CD14-positive monocyte (primary cell): ENCODE measurements at regions of chr11 and their contacts with region 1.

Region 1: DNA sequence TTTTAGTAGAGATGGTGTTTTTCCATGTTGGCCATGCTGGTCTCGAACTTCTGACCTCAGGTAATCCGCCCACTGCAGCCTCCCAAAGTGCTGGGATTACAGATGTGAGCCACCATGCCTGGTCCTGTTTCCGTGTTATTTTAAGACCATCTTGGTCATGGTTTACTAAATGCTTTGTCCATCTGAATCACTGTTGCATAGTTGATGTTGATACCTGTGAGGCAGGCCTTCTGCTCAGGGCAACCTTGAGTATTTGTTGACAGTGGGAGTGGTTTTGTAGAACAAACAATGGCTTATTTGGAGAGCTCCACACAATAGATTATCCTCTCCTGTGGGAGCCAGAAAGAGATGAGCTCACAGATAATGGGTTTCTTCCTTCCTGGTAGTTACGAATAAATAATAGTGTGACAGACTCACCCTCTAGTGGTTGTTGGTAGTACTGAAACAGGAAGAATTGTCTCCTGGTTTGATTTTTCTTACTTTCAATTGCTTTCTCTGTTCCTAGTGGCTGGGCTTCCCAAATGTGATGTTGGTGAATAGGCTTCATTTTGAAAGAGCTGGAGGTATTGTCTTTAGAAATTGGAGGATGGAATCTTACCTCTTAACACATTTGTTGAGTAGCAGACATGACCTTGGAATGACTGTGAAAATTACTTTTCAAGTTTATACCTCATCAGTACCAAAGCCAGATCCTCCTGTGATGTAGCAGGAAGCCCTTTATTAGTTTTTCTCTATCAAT is 39.0 kb downstream of the CTNND1 start:
- DNase-seq: peak; percentile 42 to 77 (median 64)
- H3K4me3 ChIP-seq: peak overlapping the region in 1 of 3 experiments; percentile 14
- H3K4me3 Mint-ChIP-seq: peak overlapping the region in 1 of 2 donors; percentile 82
- H3K27ac ChIP-seq: peak overlapping the region in 1 of 2 donors; percentile 12
- H3K27ac Mint-ChIP-seq: peak overlapping the region in 6 of 7 donors; percentile 53 to 87 (median 76)
- H3K4me1 ChIP-seq: peaks cover 37% of the 10 kb centered on the region in 2 donors
- H3K4me1 Mint-ChIP-seq: peaks cover 31% of the 10 kb centered on the region
- H3K27me3 ChIP-seq: no peaks in the 10 kb centered on the region
- H3K27me3 Mint-ChIP-seq: peaks cover 0 to 1% (median 0%) of the 10 kb centered on the region in 3 donors
- CTCF ChIP-seq: peak; percentile 90

Region 2: GRCh38 chr11:57567515-57568329 is 232.9 kb before region 1 on chr11 and contains the start of gene UBE2L6:
- intact Hi-C with region 1: loop called (anchors 5 kb)
- DNase-seq: peak in 1 of 3 donors; percentile 15
- H3K4me3 ChIP-seq: peak within 1 kb of the TSS; percentile 69 to 100 (median 98)
- H3K4me3 Mint-ChIP-seq: peak within 1 kb of the TSS; percentile 97 to 98
- H3K27ac ChIP-seq: peak within 1 kb of the TSS; percentile 63 to 93
- H3K27ac Mint-ChIP-seq: peak within 1 kb of the TSS; percentile 84 to 95 (median 93)
- H3K4me1 ChIP-seq: peaks cover 42 to 58% of the 10 kb centered on the region in 2 donors
- H3K4me1 Mint-ChIP-seq: peaks cover 56% of the 10 kb centered on the region
- H3K27me3 ChIP-seq: no peaks in the 10 kb centered on the region
- H3K27me3 Mint-ChIP-seq: peaks cover 0 to 2% (median 0%) of the 10 kb centered on the region in 3 donors
- CTCF ChIP-seq: peak; percentile 98
- polyA plus RNA-seq, gene UBE2L6: 101 to 284 (median 268) TPM

Region 3: DNA sequence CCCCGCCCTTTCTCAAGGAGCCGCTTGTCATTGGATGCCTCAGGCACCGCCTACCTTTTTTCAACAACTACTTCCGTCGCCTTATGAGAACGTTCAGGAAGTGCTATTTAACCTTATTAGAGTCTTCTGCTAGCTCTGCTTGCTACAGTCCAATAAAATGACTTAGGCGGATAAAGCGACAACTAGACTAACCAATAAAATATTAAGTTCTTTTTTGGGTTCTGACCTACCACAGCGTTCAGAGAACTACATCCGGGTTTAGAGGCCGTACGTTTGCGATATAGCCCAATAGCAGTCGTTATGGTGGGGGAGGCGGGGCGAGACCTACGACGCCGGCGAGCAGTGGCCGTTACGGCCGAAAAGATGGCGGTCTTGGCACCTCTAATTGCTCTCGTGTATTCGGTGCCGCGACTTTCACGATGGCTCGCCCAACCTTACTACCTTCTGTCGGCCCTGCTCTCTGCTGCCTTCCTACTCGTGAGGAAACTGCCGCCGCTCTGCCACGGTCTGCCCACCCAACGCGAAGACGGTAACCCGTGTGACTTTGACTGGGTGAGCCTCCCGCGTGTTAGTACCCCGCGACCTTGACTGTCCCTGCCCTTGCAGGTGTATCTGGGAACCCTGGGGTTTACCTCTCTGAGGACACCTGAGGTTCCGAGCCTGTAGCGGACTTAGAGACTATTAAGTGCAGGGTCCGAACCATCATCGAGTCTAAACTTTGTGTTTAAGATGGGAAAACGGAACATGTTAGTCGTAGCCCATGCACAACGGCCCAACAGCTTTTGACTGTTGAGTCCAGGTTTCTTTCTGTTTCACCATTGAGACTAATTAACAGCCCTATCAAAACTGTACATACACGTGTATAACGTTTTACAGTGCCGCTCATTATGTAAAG is 88.1 kb before region 1 on chr11 and contains the start of gene TMX2:
- intact Hi-C with region 1: loop called in 1 of 2 experiments (anchors 5 kb)
- DNase-seq: peak; percentile 96 to 99 (median 98)
- H3K4me3 ChIP-seq: peak within 1 kb of the TSS; percentile 72 to 100 (median 96)
- H3K4me3 Mint-ChIP-seq: peak within 1 kb of the TSS; percentile 98
- H3K27ac ChIP-seq: peak within 1 kb of the TSS; percentile 72 to 97
- H3K27ac Mint-ChIP-seq: peak within 1 kb of the TSS; percentile 95 to 99 (median 98)
- H3K4me1 ChIP-seq: peaks cover 22 to 31% of the 10 kb centered on the region in 2 donors
- H3K4me1 Mint-ChIP-seq: peaks cover 32% of the 10 kb centered on the region
- H3K27me3 ChIP-seq: no peaks in the 10 kb centered on the region
- H3K27me3 Mint-ChIP-seq: peaks cover 0 to 2% (median 2%) of the 10 kb centered on the region in 3 donors
- CTCF ChIP-seq: no peak
- polyA plus RNA-seq, gene TMX2: 28.9 to 71.6 (median 52.9) TPM

Region 4: DNA sequence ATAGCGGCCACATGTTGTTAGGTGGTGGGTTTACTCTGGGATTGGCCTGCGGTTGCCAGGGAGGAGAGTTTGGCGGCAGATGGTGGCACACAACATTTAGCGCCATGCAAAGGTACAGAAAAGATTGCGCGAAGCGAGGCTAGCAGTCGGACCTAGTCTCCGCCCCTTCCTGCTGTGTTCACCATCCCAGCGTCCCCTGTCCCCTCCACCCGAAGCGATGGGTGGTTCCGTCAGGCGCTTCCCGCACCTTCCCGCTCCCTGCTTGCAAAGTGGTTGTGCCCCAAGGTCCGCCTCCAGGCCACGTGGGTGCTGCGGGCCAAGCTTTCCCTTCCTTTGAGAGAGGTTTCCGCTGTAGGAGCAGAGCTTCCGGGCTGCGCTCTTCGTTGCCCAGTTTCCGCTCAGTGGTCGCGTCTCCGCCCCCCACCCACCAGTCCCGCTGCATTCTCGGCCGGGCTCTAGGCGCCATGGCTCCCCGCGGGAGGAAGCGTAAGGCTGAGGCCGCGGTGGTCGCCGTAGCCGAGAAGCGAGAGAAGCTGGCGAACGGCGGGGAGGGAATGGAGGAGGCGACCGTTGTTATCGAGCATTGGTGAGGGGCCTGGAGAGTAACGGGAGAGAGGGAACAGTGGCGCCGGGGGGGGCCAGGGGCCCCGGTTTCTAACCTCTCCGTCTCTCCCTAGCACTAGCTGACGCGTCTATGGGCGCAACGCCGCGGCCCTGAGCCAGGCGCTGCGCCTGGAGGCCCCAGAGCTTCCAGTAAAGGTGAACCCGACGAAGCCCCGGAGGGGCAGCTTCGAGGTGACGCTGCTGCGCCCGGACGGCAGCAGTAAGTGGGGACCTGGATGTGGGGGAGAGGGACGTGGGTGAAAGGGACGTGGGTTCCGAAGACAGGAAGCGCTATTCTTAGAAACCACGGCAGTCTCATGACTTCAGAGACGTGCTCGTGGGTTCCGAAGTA is 59.2 kb before region 1 on chr11 and contains the start of gene SELENOH:
- intact Hi-C with region 1: loop called in 1 of 2 experiments (anchors 5 kb)
- DNase-seq: peak; percentile 90 to 93 (median 90)
- H3K4me3 ChIP-seq: peak within 1 kb of the TSS; percentile 89 to 98 (median 94)
- H3K4me3 Mint-ChIP-seq: peak within 1 kb of the TSS; percentile 96 to 99
- H3K27ac ChIP-seq: peak within 1 kb of the TSS; percentile 87 to 94
- H3K27ac Mint-ChIP-seq: peak within 1 kb of the TSS; percentile 92 to 97 (median 94)
- H3K4me1 ChIP-seq: peaks cover 15 to 17% of the 10 kb centered on the region in 2 donors
- H3K4me1 Mint-ChIP-seq: peaks cover 14% of the 10 kb centered on the region
- H3K27me3 ChIP-seq: no peaks in the 10 kb centered on the region
- H3K27me3 Mint-ChIP-seq: no peaks in the 10 kb centered on the region
- CTCF ChIP-seq: no peak
- polyA plus RNA-seq, gene SELENOH: 99.5 to 260 (median 206) TPM

Region 5: GRCh38 chr11:57761301-57762234 is 39.0 kb before region 1 on chr11 and contains the start of gene CTNND1:
- intact Hi-C with region 1: loop called in 1 of 2 experiments (anchors 5 kb)
- DNase-seq: peak; percentile 75 to 89 (median 87)
- H3K4me3 ChIP-seq: peak within 1 kb of the TSS; percentile 83 to 99 (median 93)
- H3K4me3 Mint-ChIP-seq: peak within 1 kb of the TSS; percentile 97
- H3K27ac ChIP-seq: peak within 1 kb of the TSS; percentile 29 to 87
- H3K27ac Mint-ChIP-seq: peak within 1 kb of the TSS; percentile 87 to 98 (median 94)
- H3K4me1 ChIP-seq: peaks cover 23 to 27% of the 10 kb centered on the region in 2 donors
- H3K4me1 Mint-ChIP-seq: peaks cover 35% of the 10 kb centered on the region
- H3K27me3 ChIP-seq: no peaks in the 10 kb centered on the region
- H3K27me3 Mint-ChIP-seq: peaks cover 0 to 5% (median 0%) of the 10 kb centered on the region in 3 donors
- CTCF ChIP-seq: no peak
- polyA plus RNA-seq, gene CTNND1: 10.8 to 36.0 (median 13.7) TPM

Region 6: DNA sequence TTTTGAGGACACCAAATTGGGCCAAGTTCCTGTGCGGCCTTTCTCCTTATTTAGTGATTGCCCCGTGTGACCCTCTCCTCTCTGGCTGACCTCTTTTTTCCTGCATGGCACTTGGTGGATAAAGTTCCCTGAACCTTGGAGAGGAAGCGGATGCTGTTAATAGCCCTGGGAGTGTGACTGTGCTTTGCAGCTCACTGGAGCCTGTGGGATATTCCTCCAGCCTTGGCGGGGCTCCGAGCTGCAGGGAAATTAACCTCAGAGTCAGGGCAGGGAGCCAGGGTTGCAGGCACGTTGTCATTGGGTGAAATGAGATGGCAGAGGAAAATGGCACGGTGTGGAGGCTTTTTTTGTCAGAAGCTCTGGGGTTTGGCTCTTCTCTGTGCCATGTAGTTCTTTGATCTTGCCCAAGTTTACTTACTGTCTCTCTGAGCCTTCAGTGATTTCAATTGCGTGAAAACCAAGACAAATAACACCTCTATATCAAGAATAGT is 224.0 kb after region 1 on chr11:
- intact Hi-C with region 1: no loop called
- DNase-seq: no peak
- H3K4me3 ChIP-seq: no peak overlapping the region
- H3K4me3 Mint-ChIP-seq: no peak overlapping the region
- H3K27ac ChIP-seq: no peak overlapping the region
- H3K27ac Mint-ChIP-seq: peak overlapping the region in 1 of 7 donors; percentile 1
- H3K4me1 ChIP-seq: no peaks in the 10 kb centered on the region
- H3K4me1 Mint-ChIP-seq: no peaks in the 10 kb centered on the region
- H3K27me3 ChIP-seq: no peaks in the 10 kb centered on the region
- H3K27me3 Mint-ChIP-seq: peaks cover 0 to 5% (median under 1%) of the 10 kb centered on the region in 3 donors
- CTCF ChIP-seq: no peak

Region 7: GRCh38 chr11:58142761-58143160 is 342.1 kb after region 1 on chr11:
- intact Hi-C with region 1: no loop called
- DNase-seq: no peak
- H3K4me3 ChIP-seq: no peak overlapping the region
- H3K4me3 Mint-ChIP-seq: no peak overlapping the region
- H3K27ac ChIP-seq: no peak overlapping the region
- H3K27ac Mint-ChIP-seq: no peak overlapping the region
- H3K4me1 ChIP-seq: no peaks in the 10 kb centered on the region
- H3K4me1 Mint-ChIP-seq: no peaks in the 10 kb centered on the region
- H3K27me3 ChIP-seq: no peaks in the 10 kb centered on the region
- H3K27me3 Mint-ChIP-seq: peaks cover 0 to 2% (median 0%) of the 10 kb centered on the region in 3 donors
- CTCF ChIP-seq: no peak